CD4-positive, alpha-beta memory T cell (primary cell): ENCODE measurements at regions of chr13 and their contacts with region 1.

Region 1: DNA sequence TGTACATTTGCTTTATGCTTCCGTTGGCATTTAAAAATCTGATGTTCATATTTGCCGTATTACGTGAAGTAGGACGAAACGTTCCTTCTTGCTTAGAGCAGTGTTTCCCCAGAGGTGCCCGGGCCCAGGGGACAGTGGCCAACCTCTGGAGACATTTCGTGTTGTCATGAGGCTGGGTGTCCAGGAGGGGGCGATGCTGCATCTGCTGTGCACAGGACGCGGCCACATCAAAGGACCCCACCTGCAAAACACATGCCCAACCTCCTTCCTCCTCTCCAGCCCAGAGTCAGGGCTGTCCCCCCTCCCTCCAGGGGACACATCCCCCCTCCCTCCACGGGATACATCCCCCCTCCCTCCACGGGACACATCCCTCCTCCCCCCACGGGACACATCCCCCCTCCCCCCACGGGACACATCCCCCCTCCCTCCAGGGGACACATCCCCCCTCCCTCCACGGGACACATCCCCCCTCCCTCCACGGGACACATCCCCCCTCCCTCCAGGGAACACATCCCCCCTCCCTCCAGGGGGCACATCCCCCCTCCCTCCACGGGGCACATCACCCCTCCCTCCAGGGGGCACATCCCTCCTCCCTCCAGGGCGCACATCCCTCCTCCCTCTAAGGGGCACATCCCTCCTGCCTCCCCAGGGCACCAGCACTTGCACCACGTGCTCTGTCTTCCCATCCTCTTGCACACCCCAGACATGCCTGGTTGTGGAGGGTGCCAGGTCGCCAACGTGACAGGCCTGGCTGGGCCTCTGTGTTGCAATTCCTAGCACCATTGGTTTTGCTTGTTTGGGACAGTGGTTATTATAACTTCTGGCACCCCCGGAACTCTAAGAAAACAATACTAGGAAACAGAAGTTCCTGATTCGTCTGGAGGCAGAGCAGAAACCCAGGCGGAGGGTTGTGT is 46.7 kb downstream of the GAS6 start:
- DNase-seq: peak; percentile 83 to 90 (median 86)
- H3K4me3 ChIP-seq: no peak overlapping the region
- H3K4me3 Mint-ChIP-seq: peak overlapping the region; percentile 43 to 94 (median 78)
- H3K27ac ChIP-seq: no peak overlapping the region
- H3K27ac Mint-ChIP-seq: peak overlapping the region; percentile 37 to 82 (median 68)
- H3K4me1 ChIP-seq: peaks cover 15% of the 10 kb centered on the region
- H3K4me1 Mint-ChIP-seq: peaks cover 14 to 27% (median 20%) of the 10 kb centered on the region in 4 donors
- H3K27me3 ChIP-seq: no peaks in the 10 kb centered on the region
- H3K27me3 Mint-ChIP-seq: peaks cover 1 to 2% of the 10 kb centered on the region in 2 donors

Region 2: DNA sequence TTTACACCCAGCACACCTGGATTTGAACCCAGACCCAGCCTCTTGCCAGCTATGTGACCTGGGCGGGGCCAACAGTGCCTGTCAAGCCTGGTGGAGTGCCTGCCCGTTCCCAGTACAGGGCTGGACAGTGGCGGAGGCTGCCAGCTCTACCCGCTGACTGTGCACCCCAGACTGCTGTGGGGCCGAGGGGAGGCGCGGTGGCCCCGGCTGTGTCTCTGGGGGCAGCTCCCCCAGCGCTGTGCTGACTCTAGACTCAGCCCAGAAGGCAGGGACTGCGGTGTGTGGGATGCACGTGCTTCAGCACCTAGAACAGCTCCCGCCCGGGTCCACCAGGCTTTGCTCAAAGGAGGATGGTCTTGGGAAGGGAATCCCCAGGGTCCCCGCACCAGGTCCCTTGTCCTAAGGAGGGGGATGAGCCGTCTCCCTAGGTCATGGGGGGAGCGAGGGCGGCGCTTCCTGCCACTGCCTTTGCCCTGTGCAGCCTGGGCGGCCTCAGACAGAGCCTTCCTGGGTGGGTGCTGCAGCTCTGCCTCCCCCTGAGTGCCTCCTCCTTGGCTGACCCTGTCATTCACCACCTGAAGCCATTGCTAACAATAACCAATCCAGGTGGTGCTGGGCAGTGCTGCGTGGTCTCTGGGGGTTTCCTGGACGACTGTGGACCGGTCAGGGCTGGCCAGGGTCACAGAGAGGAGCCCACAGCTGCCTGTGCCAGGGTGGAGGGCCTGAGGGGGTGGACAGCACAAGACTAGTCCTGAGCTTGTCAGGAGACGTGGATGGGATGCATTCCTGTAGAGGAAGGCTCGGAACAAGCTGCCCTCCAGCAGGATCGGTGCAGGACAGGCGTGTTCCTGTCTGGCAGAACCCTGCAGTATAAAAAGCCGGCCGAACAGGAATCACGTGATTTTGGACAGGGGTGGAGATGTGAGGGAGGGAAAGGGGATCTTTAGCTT is 39.6 kb before region 1 on chr13:
- CTCF ChIA-PET with region 1: no interaction called
- POLR2A ChIA-PET with region 1: no interaction called
- intact Hi-C with region 1: no loop called
- DNase-seq: no peak
- H3K4me3 ChIP-seq: no peak overlapping the region
- H3K4me3 Mint-ChIP-seq: no peak overlapping the region
- H3K27ac ChIP-seq: no peak overlapping the region
- H3K27ac Mint-ChIP-seq: no peak overlapping the region
- H3K4me1 ChIP-seq: no peaks in the 10 kb centered on the region
- H3K4me1 Mint-ChIP-seq: peaks cover 0 to under 1% (median 0%) of the 10 kb centered on the region in 4 donors
- H3K27me3 ChIP-seq: peaks cover 4% of the 10 kb centered on the region
- H3K27me3 Mint-ChIP-seq: peaks cover 13% of the 10 kb centered on the region in 2 donors

Region 3: GRCh38 chr13:113846636-113847318 is 29.6 kb after region 1 on chr13:
- CTCF ChIA-PET with region 1: no interaction called
- POLR2A ChIA-PET with region 1: interaction called, 3 read pairs
- intact Hi-C with region 1: loop called (anchors 2 kb)
- DNase-seq: peak in 4 of 5 donors; percentile 42 to 57 (median 48)
- H3K4me3 ChIP-seq: peak overlapping the region; percentile 5 to 11
- H3K4me3 Mint-ChIP-seq: peak overlapping the region; percentile 67 to 87 (median 79)
- H3K27ac ChIP-seq: no peak overlapping the region
- H3K27ac Mint-ChIP-seq: peak overlapping the region in 6 of 7 donors; percentile 36 to 87 (median 60)
- H3K4me1 ChIP-seq: peaks cover 42% of the 10 kb centered on the region
- H3K4me1 Mint-ChIP-seq: peaks cover 22 to 62% (median 35%) of the 10 kb centered on the region in 4 donors
- H3K27me3 ChIP-seq: no peaks in the 10 kb centered on the region
- H3K27me3 Mint-ChIP-seq: no peaks in the 10 kb centered on the region

Region 4: DNA sequence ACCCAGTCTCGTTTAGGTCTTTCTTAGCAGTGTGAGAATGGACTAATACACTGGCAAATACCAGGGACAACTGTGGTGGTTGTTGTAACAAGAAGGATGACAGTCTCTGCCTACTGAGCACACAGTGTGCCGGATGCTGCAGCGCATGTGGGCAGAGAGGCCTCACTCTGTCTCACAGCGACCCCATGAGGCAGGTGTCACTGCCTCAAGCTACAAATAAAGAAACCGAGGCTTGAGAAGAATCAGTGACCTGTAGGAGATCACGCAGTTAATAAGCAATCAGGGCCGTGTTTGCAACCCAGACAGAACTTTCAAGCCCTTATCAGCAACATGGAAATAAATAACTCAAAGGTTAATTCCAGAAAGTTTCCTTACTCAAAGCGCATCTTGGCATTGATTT is 87.2 kb after region 1 on chr13:
- CTCF ChIA-PET with region 1: interaction called, 3 read pairs
- POLR2A ChIA-PET with region 1: no interaction called
- intact Hi-C with region 1: loop called (anchors 2 kb)
- DNase-seq: peak in 4 of 5 donors; percentile 19 to 40 (median 33)
- H3K4me3 ChIP-seq: no peak overlapping the region
- H3K4me3 Mint-ChIP-seq: no peak overlapping the region
- H3K27ac ChIP-seq: no peak overlapping the region
- H3K27ac Mint-ChIP-seq: no peak overlapping the region
- H3K4me1 ChIP-seq: peaks cover 11% of the 10 kb centered on the region
- H3K4me1 Mint-ChIP-seq: peaks cover 3 to 17% (median 11%) of the 10 kb centered on the region in 4 donors
- H3K27me3 ChIP-seq: peaks cover 4% of the 10 kb centered on the region
- H3K27me3 Mint-ChIP-seq: peaks cover 5 to 11% of the 10 kb centered on the region in 2 donors

Region 5: DNA sequence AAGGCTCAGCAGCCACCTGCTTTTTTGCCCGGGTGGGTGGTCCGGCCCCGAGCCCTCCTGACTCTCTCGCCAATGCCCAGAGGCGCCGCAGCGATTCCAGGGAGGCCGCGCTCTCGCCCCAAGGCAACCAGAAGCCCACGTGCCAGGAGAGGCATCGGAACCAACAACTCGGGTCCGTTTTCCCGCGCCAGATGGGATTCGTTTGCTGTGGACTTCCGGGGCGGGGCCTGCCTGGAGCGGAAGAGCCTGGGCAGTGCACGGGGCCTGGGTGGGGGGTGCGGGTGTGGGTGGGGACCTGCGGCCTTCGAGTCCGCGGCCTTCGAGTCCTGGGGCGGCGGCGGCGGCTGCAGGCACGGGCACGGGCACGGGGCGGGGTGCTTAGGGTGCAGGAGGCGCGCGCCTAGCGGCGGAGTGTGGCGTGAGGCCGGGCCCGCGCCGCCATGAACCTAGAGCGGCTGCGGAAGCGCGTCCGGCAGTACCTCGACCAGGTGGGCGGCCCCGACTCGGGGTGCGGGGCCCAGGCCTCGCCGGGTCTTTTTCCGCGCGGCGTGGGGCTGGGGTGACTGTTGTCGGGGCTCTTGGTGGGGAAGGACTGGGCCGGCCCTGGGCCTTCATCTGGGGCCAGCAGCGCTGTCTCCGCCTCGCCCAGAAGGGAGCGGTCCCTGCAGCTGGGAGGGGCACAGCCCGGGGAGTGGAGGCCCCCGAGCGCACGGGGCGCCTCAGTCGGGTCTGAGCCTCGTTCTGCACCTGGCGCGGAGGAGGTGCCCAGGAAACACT is 417.6 kb after region 1 on chr13 and contains the start of gene CDC16:
- CTCF ChIA-PET with region 1: no interaction called
- POLR2A ChIA-PET with region 1: no interaction called
- intact Hi-C with region 1: loop called (anchors 2 kb)
- DNase-seq: peak; percentile 63 to 77 (median 71)
- H3K4me3 ChIP-seq: peak within 1 kb of the TSS; percentile 26 to 66
- H3K4me3 Mint-ChIP-seq: peak within 1 kb of the TSS; percentile 83 to 92 (median 89)
- H3K27ac ChIP-seq: peak within 1 kb of the TSS; percentile 46
- H3K27ac Mint-ChIP-seq: peak within 1 kb of the TSS; percentile 64 to 88 (median 75)
- H3K4me1 ChIP-seq: peaks cover 21% of the 10 kb centered on the region
- H3K4me1 Mint-ChIP-seq: peaks cover 16 to 33% (median 27%) of the 10 kb centered on the region in 4 donors
- H3K27me3 ChIP-seq: no peaks in the 10 kb centered on the region
- H3K27me3 Mint-ChIP-seq: peaks cover 3% of the 10 kb centered on the region in 2 donors
- total RNA-seq, gene CDC16: 86.0 to 87.9 TPM